ENCODE measurements at regions of chr3 and their contacts with region 1.

Region 1: GRCh38 chr3:56303487-56303886 is 164.8 kb downstream of the ERC2 start:
- DNase-seq: peak; percentile 15
- ATAC-seq: peak; percentile 83
- H3K4me3 ChIP-seq: no peak overlapping the region
- H3K27ac ChIP-seq: no peak overlapping the region
- H3K4me1 ChIP-seq: no peaks in the 10 kb centered on the region
- H3K27me3 ChIP-seq: 0 out of 2 replicates have a peak, but pooled peaks cover 8% of the 10 kb centered on the region
- CTCF ChIP-seq: peak in 2 of 3 experiments; percentile 73 to 76; a peak in 4 of 6 replicates
- POLR2A ChIP-seq: no peak
- RAD21 ChIP-seq: peak; percentile 47

Region 2: GRCh38 chr3:54427941-54428871 is 1875.3 kb before region 1 on chr3:
- CTCF ChIA-PET with region 1: no interaction called
- POLR2A ChIA-PET with region 1: no interaction called
- RAD21 ChIA-PET with region 1: no interaction called
- intact Hi-C with region 1: loop called (anchors 2 kb)
- DNase-seq: peak; percentile 36
- ATAC-seq: peak; percentile 49; the same call in 1 of the 2 replicates
- H3K4me3 ChIP-seq: no peak overlapping the region
- H3K27ac ChIP-seq: no peak overlapping the region
- H3K4me1 ChIP-seq: no peaks in the 10 kb centered on the region
- H3K27me3 ChIP-seq: no peaks in the 10 kb centered on the region; the same call in 1 of the 2 replicates
- CTCF ChIP-seq: peak; percentile 31 to 80 (median 80); a peak in 5 of 6 replicates
- POLR2A ChIP-seq: no peak
- RAD21 ChIP-seq: peak; percentile 70

Region 3: DNA sequence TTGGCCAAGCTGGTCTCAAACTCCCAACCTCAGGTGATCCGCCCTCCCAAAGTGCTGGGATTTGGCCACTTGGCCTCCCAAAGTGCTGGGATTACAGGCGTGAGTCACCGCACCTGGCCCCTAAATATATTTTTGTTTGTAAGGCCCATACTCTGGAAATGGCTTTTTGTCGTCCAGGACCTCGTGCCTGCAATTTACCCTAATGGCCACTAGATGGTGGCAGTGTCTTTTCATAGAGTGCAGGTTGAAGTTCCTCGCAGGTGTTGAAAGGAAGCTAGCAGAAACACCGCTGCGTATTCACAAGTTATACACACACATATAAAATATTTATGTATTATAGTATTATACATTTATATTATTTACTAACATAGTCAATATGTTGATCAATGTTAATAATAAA is 1472.8 kb before region 1 on chr3:
- CTCF ChIA-PET with region 1: interaction called, 4 read pairs
- POLR2A ChIA-PET with region 1: no interaction called
- RAD21 ChIA-PET with region 1: no interaction called
- intact Hi-C with region 1: loop called (anchors 5 kb)
- DNase-seq: peak; percentile 16
- ATAC-seq: no peak
- H3K4me3 ChIP-seq: no peak overlapping the region
- H3K27ac ChIP-seq: no peak overlapping the region
- H3K4me1 ChIP-seq: no peaks in the 10 kb centered on the region
- H3K27me3 ChIP-seq: no peaks in the 10 kb centered on the region
- CTCF ChIP-seq: peak; percentile 27 to 71 (median 68); a peak in 5 of 6 replicates
- POLR2A ChIP-seq: no peak
- RAD21 ChIP-seq: peak; percentile 60

Region 4: GRCh38 chr3:54853573-54854404 is 1449.7 kb before region 1 on chr3:
- CTCF ChIA-PET with region 1: no interaction called
- POLR2A ChIA-PET with region 1: no interaction called
- RAD21 ChIA-PET with region 1: no interaction called
- intact Hi-C with region 1: loop called (anchors 5 kb)
- DNase-seq: no peak
- ATAC-seq: peak; percentile 77
- H3K4me3 ChIP-seq: no peak overlapping the region
- H3K27ac ChIP-seq: no peak overlapping the region
- H3K4me1 ChIP-seq: no peaks in the 10 kb centered on the region
- H3K27me3 ChIP-seq: no peaks in the 10 kb centered on the region
- CTCF ChIP-seq: peak; percentile 16 to 82 (median 58); a peak in 3 of 6 replicates
- POLR2A ChIP-seq: no peak
- RAD21 ChIP-seq: peak; percentile 57

Measured in HCT116 (cell line).